H1 (cell line): ENCODE measurements at regions of chr6 and their contacts with region 1.

Region 1: GRCh38 chr6:39302669-39303424 is 11.4 kb downstream of the KCNK17 start:
- DNase-seq: peak; percentile 73 to 97
- H3K4me3 ChIP-seq: no peak overlapping the region
- H3K27ac ChIP-seq: no peak overlapping the region
- H3K4me1 ChIP-seq: peaks cover 0 to 4% (median under 1%) of the 10 kb centered on the region in 4 experiments; a peak in 2 of 7 replicates
- H3K27me3 ChIP-seq: no peaks in the 10 kb centered on the region; a peak in 1 of 7 replicates
- CTCF ChIP-seq: peak; percentile 95 to 98 (median 97)
- EP300 ChIP-seq: no peak
- POLR2A ChIP-seq: no peak
- RAD21 ChIP-seq: peak; percentile 96 to 98

Region 2: GRCh38 chr6:39128106-39128505 is 174.7 kb before region 1 on chr6:
- CTCF ChIA-PET with region 1: interaction called, 14 read pairs
- POLR2A ChIA-PET with region 1: no interaction called
- DNase-seq: no peak
- H3K4me3 ChIP-seq: no peak overlapping the region
- H3K27ac ChIP-seq: no peak overlapping the region
- H3K4me1 ChIP-seq: peaks cover 0 to 5% (median 0%) of the 10 kb centered on the region in 4 experiments; a peak in 1 of 7 replicates
- H3K27me3 ChIP-seq: peaks cover 0 to 1% (median 0%) of the 10 kb centered on the region in 4 experiments; a peak in 2 of 7 replicates
- CTCF ChIP-seq: no peak
- EP300 ChIP-seq: no peak
- POLR2A ChIP-seq: no peak
- RAD21 ChIP-seq: no peak

Region 3: GRCh38 chr6:39228992-39229767 is 73.7 kb before region 1 on chr6 and contains the start of gene KCNK5:
- CTCF ChIA-PET with region 1: interaction called, 1,738 read pairs
- POLR2A ChIA-PET with region 1: interaction called, 23 read pairs
- DNase-seq: peak; percentile 80 to 93
- H3K4me3 ChIP-seq: peak within 1 kb of the TSS; percentile 63 to 88 (median 76)
- H3K27ac ChIP-seq: peak within 1 kb of the TSS; percentile 68; the same call in 1 of the 2 replicates
- H3K4me1 ChIP-seq: peaks cover 24 to 52% (median 36%) of the 10 kb centered on the region in 4 experiments
- H3K27me3 ChIP-seq: no peaks in the 10 kb centered on the region; a peak in 1 of 7 replicates
- CTCF ChIP-seq: peak; percentile 83 to 91 (median 90)
- EP300 ChIP-seq: no peak
- POLR2A ChIP-seq: peak; percentile 77 to 88
- RAD21 ChIP-seq: peak; percentile 65 to 83
- total RNA-seq, gene KCNK5: 42.2 and 44.3 TPM in 2 replicates

Region 4: GRCh38 chr6:39273406-39273821 is 29.4 kb before region 1 on chr6:
- CTCF ChIA-PET with region 1: interaction called, 30 read pairs
- POLR2A ChIA-PET with region 1: no interaction called
- DNase-seq: peak; percentile 17 to 64
- H3K4me3 ChIP-seq: no peak overlapping the region
- H3K27ac ChIP-seq: no peak overlapping the region
- H3K4me1 ChIP-seq: peaks cover 12 to 21% (median 16%) of the 10 kb centered on the region in 4 experiments
- H3K27me3 ChIP-seq: no peaks in the 10 kb centered on the region
- CTCF ChIP-seq: no peak
- EP300 ChIP-seq: no peak
- POLR2A ChIP-seq: no peak
- RAD21 ChIP-seq: no peak

Region 5: GRCh38 chr6:39389484-39389767 is 86.6 kb after region 1 on chr6:
- CTCF ChIA-PET with region 1: no interaction called
- POLR2A ChIA-PET with region 1: no interaction called
- DNase-seq: no peak
- H3K4me3 ChIP-seq: no peak overlapping the region
- H3K27ac ChIP-seq: no peak overlapping the region
- H3K4me1 ChIP-seq: no peaks in the 10 kb centered on the region
- H3K27me3 ChIP-seq: no peaks in the 10 kb centered on the region
- CTCF ChIP-seq: peak; percentile 46 to 71 (median 61)
- EP300 ChIP-seq: no peak
- POLR2A ChIP-seq: no peak
- RAD21 ChIP-seq: peak; percentile 81 to 88

Region 6: DNA sequence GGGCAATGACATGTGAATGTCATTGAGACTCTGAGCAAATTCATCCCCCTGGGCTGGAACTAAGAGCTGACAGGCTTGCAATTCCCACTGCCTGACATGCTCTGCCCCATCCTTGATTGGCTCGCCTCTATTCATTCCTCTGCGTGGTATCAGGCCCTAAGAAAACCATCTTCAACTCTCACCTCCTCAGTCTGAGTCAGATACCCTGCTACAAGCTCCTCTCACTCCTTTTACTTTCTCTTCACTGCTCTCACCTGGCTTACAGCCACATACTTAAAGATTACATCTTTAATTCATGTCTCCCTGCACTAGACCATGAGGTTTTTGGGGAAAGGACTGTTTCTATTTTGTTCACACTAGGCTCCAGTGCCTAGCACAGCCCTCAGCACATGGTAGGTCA is 290.8 kb after region 1 on chr6:
- CTCF ChIA-PET with region 1: no interaction called
- POLR2A ChIA-PET with region 1: no interaction called
- DNase-seq: no peak
- H3K4me3 ChIP-seq: no peak overlapping the region
- H3K27ac ChIP-seq: no peak overlapping the region
- H3K4me1 ChIP-seq: no peaks in the 10 kb centered on the region
- H3K27me3 ChIP-seq: no peaks in the 10 kb centered on the region
- CTCF ChIP-seq: no peak
- EP300 ChIP-seq: no peak
- POLR2A ChIP-seq: no peak
- RAD21 ChIP-seq: no peak